ENCODE measurements at regions of chr3 and their contacts with region 1.

Region 1: GRCh38 chr3:50611464-50612233 is at the start of gene CISH:
- DNase-seq: no peak
- H3K4me3 ChIP-seq: peak within 1 kb of the TSS; percentile 70
- CTCF ChIP-seq: peak; percentile 71

Region 2: DNA sequence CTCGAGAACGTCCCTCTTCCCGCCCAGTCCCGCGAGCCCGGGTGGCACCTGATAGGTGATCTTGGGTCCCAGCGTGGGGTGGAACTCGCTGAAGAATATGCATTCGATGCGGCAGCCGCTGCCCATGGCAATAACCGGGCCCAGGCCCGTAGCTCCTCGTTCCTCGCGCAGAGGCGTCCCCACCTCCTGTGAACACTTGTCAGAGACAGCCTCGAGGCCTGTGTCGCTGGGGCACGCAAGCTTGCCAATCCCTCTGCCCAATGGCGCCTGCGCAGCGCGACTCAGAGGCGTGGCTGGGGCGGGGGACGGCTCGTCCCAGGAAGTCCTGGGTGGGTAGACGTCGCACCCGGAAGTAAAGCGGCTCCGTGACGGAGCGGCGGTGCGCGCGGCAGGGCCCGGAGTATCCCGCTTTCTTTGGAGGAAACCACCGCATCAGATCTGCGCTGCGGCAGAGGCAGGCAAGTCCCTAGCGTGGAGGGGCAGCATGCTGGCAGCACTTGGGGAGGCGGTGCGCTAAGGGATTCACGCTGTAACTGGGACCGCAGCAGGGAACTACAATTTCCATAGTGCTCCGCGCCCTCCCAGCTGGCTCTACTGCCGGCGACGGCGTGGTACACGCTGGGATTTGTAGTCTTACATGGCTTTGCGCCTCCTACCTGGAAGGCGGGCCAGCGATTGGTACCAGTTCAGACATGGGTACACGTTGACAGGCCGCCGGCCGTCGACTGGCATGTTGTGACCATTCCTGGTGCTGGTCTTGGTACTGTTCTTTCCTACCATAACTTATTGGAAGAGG is 260.9 kb before region 1 on chr3 and contains the starts of genes CYB561D2 and NPRL2:
- CTCF ChIA-PET with region 1: interaction called, 54 read pairs
- POLR2A ChIA-PET with region 1: interaction called, 3 read pairs
- DNase-seq: peak; percentile 55
- H3K4me3 ChIP-seq: peak within 1 kb of the TSS; percentile 99
- CTCF ChIP-seq: no peak

Region 3: DNA sequence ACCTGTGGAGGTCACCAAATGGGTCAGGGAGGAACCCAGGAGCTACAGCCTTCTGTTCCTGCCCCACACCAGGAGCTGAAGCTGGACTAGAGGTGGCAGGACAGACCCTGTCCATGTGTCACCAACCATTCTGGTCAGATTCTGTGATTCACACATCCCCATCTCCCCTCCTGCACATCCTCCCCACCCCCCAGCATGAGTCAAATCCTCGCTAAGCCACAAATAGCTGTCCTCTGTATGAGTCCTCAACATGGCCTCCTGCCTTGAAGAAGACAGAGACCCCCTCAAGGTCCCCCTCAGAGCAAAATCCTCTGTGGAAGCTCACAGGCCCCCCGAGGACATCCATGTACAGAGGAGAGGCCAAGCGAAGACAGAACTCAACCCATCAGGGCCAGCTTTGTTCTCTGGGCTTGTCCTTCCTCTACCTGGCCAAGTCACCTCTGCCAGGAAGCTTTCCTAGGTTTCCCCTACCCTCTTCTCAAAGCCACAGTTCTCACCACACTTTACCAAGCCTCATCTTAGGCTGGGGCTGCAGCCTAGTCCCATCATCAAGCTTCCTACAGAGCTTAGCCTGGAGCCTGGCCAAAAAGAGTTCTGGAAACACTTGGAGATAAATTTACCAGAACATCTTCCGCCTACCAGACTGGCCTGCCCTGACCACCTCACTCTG is 125.3 kb before region 1 on chr3:
- CTCF ChIA-PET with region 1: no interaction called
- POLR2A ChIA-PET with region 1: no interaction called
- DNase-seq: no peak
- H3K4me3 ChIP-seq: no peak overlapping the region
- CTCF ChIP-seq: no peak

Region 4: DNA sequence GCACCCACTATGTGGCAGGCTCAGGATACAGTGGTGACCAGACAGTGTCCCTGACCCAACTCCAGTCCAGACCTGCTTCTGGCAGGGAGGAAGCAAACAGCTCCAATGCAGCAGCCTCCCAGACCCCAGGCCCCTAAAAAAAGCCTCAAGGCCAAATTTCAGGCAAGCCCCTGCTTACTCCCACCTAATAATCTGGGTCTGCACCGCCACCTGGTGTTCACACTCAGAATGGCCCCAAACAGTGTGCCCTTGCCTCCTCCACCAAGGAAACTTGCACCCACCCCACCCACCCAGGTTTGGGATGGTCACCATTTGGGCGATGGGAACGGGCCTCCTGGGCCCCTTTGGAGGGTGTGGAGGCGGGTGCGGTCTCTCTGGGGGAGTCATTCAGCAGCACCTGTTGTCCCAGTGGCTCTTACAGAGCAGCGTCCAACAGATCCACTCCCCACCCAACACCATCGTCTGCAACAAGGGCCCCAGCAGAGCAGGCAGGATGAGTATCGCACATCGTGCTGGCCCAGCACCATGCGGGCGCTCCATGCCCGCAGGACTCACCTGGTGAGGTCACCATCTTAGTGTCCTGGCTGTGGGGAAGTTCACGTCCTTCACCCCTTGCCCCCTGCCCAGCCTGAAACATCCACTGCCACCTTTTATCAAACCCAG is 61.4 kb before region 1 on chr3:
- CTCF ChIA-PET with region 1: interaction called, 55 read pairs
- POLR2A ChIA-PET with region 1: no interaction called
- DNase-seq: no peak
- H3K4me3 ChIP-seq: no peak overlapping the region
- CTCF ChIP-seq: peak; percentile 71

Region 5: GRCh38 chr3:50627407-50628051 is 15.9 kb after region 1 on chr3:
- CTCF ChIA-PET with region 1: interaction called, 108 read pairs
- POLR2A ChIA-PET with region 1: no interaction called
- DNase-seq: no peak
- H3K4me3 ChIP-seq: no peak overlapping the region
- CTCF ChIP-seq: peak; percentile 55

Region 6: GRCh38 chr3:50687127-50687751 is 75.6 kb after region 1 on chr3:
- CTCF ChIA-PET with region 1: no interaction called
- POLR2A ChIA-PET with region 1: no interaction called
- DNase-seq: no peak
- H3K4me3 ChIP-seq: no peak overlapping the region
- CTCF ChIP-seq: no peak

Region 7: DNA sequence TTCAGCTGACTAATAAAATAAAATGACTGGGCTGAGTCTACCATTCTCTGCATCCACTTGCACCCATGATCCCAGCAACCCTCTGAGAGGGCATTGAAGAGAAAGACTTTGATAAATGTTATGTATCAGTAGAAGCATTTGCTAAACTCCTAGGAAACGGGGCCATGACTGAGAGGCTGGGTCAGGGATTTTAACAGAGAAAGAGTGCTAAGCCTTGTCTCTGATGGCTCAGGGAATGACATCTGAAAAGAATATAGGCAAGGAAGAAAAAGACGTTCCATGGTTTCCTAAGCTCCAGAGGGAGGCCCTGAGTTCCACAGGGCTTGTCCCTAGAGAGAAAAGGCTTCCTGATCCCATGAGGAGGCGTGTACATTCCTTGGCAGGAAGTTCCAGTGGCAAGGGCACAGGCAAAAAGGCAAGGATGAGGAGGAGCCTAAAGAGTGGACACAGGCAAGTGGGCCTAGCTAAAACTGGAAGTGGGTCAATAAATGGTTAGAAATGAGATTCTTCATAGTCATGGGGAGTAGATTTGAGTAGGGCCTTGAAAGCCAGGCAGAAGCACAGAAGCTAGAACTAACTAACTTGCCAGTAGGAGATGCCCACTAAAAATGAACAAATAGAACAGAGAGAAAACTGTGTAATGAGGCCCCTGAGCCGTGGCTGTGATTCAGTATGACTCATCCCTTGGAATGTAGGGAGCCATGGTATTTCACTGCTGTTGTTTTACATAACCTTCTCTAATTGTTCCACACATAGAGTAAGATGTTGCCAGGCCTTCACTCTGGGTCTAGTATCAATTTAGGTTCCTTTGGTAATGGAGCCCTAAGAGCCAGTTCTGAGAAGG is 728.6 kb after region 1 on chr3:
- CTCF ChIA-PET with region 1: interaction called, 10 read pairs
- POLR2A ChIA-PET with region 1: no interaction called
- DNase-seq: peak; percentile 75
- H3K4me3 ChIP-seq: no peak overlapping the region
- CTCF ChIP-seq: no peak

Region 8: DNA sequence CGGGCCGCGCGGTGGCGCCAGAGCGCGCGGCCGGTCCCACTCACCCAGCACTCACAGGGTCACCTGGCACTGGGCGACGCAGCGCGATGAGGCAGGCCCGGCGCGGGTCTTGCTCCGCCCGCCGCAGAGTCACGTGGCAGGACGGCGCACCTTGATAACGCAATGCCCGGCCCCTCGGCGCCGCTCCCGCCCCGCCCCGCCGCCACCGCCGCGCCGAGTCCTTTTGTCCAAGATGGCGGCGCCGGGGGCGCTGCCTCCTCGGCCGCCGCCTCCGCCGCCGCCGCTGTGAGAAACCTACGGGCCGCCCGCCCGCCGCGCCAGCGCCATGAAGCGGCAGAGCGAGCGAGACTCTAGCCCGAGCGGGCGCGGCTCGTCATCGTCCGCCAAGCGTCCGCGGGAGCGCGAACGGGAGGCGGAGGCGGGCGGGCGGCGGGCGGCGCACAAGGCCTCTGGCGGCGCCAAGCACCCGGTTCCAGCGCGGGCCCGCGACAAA is 779.5 kb after region 1 on chr3 and contains the start of gene RBM15B:
- CTCF ChIA-PET with region 1: interaction called, 95 read pairs
- POLR2A ChIA-PET with region 1: no interaction called
- DNase-seq: peak; percentile 63
- H3K4me3 ChIP-seq: peak within 1 kb of the TSS; percentile 75
- CTCF ChIP-seq: peak; percentile 96

Region 9: DNA sequence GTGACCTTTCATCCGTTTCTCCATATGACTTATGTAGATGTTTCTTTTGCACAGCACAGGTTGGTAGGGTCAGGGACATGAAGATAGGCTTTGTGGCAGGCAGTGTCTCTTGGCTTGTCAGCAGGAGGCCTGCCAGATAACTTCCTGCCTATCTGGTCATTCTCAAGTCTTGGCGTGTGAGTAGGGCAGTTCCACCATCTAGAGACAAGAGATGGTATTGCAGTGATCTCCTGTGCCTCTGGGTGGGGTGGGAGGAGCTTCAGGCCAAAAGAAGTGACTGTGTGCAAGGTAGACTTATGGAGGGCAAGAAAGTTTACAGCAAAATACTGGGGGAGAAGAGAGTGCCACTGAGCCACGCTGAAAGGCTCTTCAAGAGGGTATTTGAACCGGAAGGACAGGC is 1070.4 kb after region 1 on chr3:
- CTCF ChIA-PET with region 1: interaction called, 11 read pairs
- POLR2A ChIA-PET with region 1: no interaction called
- DNase-seq: peak; percentile 63
- H3K4me3 ChIP-seq: no peak overlapping the region
- CTCF ChIP-seq: peak; percentile 84

Measured in AG04449 (cell line).